ENCODE measurements at regions of chr1 and their contacts with region 1.

Region 1: DNA sequence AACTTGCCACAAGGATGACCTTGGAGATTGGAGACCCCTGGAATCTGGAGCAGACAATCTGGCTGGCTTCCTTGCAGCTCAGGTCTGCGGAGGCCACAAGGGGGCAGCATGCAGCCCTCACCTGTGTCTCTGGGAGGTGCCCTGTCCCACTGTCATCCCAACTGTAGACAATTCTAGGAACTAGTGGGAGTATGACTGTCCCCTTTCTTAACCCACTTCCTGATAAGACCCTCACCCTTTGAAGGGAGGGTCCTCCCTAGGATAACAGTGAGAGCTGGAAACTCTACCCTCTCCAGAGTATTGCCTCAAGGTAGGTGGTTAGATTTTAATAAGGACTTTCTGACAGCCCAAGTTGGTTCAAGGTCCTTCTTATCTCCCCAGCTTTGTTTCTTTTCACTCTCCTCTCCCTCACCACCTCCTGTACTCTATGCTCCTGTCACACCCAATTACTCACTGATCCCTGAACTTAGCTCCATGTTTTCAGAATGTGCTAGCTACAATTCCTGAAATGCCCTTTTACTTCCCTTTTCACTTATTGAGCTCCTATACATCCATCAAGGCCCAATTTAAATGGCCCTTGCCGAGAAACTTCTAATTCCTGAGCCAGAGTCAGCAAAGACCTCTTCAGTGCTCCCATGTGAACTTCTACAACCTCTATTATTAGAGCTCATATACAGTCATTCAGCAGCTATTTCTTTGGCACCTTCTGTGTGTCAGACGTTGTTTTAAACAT is 9.2 kb upstream of the KCNQ4 start:
- DNase-seq: peak; percentile 61
- H3K4me3 ChIP-seq: no peak overlapping the region
- H3K27ac ChIP-seq: no peak overlapping the region
- H3K4me1 ChIP-seq: no peaks in the 10 kb centered on the region
- CTCF ChIP-seq: peak; percentile 97

Region 2: GRCh38 chr1:40763742-40764532 is 10.5 kb before region 1 on chr1:
- CTCF ChIA-PET with region 1: interaction called, 10 read pairs
- POLR2A ChIA-PET with region 1: interaction called, 3 read pairs
- intact Hi-C with region 1: no loop called
- DNase-seq: no peak
- H3K4me3 ChIP-seq: no peak overlapping the region
- H3K27ac ChIP-seq: no peak overlapping the region
- H3K4me1 ChIP-seq: peaks cover 10% of the 10 kb centered on the region
- CTCF ChIP-seq: no peak

Region 3: DNA sequence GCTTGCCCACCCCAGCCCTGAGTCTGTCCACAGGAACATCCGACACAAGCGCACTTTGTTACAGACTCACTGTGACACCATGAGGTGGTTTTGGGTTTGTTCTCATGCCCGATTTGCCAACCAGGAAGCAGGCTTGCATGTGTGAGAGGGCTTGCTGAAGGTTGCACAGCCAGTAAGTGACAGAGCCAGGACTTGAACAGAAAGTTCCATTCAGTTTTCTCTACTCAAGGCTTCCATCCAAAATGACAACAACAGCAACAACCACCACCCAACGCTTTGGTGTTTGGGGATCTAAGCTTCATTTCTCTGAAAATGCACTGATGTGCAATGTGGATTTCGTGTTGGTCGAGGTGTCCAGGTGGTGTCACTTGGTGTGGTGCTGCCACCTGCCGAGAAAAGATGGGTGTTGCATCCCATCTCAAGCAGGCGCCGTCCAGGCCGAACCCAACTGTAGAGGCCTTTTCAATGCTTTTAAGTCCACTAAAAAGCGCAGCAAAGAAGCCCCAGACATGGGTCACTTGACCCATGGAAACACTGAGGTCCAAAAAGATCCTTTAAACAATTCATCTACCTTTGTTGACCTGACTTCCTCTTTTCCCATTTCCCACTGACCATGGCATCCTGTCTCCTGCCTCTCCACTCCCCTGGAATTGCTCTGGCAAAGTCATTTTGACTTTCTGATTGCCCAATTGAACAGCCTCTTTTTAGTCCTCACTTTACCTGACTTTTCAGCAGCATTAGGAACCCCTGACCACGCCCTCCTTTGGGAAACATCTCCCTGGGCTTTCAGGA is 75.6 kb after region 1 on chr1:
- CTCF ChIA-PET with region 1: interaction called, 8 read pairs
- POLR2A ChIA-PET with region 1: interaction called, 3 read pairs
- intact Hi-C with region 1: loop called (anchors 1 kb)
- DNase-seq: peak; percentile 82
- H3K4me3 ChIP-seq: no peak overlapping the region
- H3K27ac ChIP-seq: no peak overlapping the region
- H3K4me1 ChIP-seq: peaks cover 19% of the 10 kb centered on the region
- CTCF ChIP-seq: peak; percentile 98

Region 4: DNA sequence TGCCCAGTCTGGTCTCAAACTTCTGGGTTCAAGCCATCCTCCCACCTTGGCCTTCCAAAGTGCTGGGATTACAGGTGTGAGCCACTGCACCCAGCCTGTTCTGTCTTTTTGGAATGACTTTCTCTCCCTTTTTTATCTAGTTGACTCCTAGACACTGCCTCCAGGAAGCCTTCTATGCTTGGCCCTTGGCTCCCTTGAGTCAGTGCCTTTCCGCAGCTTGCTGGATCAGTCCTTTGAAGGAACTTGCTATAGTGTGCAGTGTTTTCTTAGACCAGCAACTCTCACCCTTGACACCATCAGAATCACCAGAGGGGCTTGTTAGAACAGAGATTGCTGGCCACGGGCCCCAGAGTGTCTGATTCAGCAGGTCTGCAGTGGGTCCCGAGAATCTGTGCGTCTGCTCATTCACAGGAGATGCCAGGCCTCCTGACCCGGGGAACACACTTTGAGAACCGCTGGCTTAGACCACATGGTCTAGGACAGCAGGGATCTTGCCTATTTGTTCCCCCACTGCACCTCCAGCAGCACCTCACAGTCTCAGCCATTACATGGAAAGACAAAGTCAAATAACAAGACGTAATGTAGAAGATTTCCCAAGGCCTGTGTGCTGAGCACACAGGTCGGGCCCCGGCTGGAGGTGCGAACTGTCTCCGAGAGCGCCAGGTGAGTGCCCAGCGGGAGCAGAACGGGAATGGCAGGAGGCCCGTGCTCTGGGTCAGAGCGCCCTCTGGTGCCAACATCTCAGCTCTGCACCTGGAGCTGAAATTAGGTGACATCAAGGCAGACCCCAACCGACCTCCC is 177.7 kb after region 1 on chr1:
- CTCF ChIA-PET with region 1: no interaction called
- POLR2A ChIA-PET with region 1: no interaction called
- intact Hi-C with region 1: loop called (anchors 2 kb)
- DNase-seq: peak; percentile 56
- H3K4me3 ChIP-seq: no peak overlapping the region
- H3K27ac ChIP-seq: no peak overlapping the region
- H3K4me1 ChIP-seq: no peaks in the 10 kb centered on the region
- CTCF ChIP-seq: peak; percentile 93

Measured in OCI-LY7 (cell line).